Activated naive CD4-positive, alpha-beta T cell treated with anti-CD3 and anti-CD28 coated beads for 36 hours (primary cell): ENCODE measurements at regions of chr10 and their contacts with region 1.

Region 1: GRCh38 chr10:104925232-104925851 is 284.3 kb downstream of the SORCS3 start:
- DNase-seq: peak; percentile 61
- H3K4me3 Mint-ChIP-seq: no peak overlapping the region
- H3K27ac Mint-ChIP-seq: no peak overlapping the region
- H3K4me1 Mint-ChIP-seq: no peaks in the 10 kb centered on the region
- H3K27me3 Mint-ChIP-seq: no peaks in the 10 kb centered on the region

Region 2: GRCh38 chr10:104406715-104407650 is 518.4 kb before region 1 on chr10:
- CTCF ChIA-PET with region 1: no interaction called
- intact Hi-C with region 1: loop called (anchors 10 kb)
- DNase-seq: no peak
- H3K4me3 Mint-ChIP-seq: no peak overlapping the region
- H3K27ac Mint-ChIP-seq: no peak overlapping the region
- H3K4me1 Mint-ChIP-seq: peaks cover 2% of the 10 kb centered on the region
- H3K27me3 Mint-ChIP-seq: peaks cover 12% of the 10 kb centered on the region

Region 3: GRCh38 chr10:104642658-104643302 is 282.6 kb before region 1 on chr10:
- CTCF ChIA-PET with region 1: interaction called, 4 read pairs
- intact Hi-C with region 1: loop called (anchors 2 kb)
- DNase-seq: peak; percentile 65
- H3K4me3 Mint-ChIP-seq: peak overlapping the region; percentile 7
- H3K27ac Mint-ChIP-seq: no peak overlapping the region
- H3K4me1 Mint-ChIP-seq: peaks cover 13% of the 10 kb centered on the region
- H3K27me3 Mint-ChIP-seq: peaks cover 66% of the 10 kb centered on the region

Region 4: GRCh38 chr10:104766341-104766740 is 159.0 kb before region 1 on chr10:
- CTCF ChIA-PET with region 1: no interaction called
- intact Hi-C with region 1: loop called (anchors 10 kb)
- DNase-seq: peak; percentile 9
- H3K4me3 Mint-ChIP-seq: no peak overlapping the region
- H3K27ac Mint-ChIP-seq: no peak overlapping the region
- H3K4me1 Mint-ChIP-seq: no peaks in the 10 kb centered on the region
- H3K27me3 Mint-ChIP-seq: peaks cover 2% of the 10 kb centered on the region